Activated B cell treated with CpG ODN at 0.5 μM for 24 hours (primary cell): ENCODE measurements at regions of chrX and their contacts with region 1.

Region 1: GRCh38 chrX:2707334-2707760 is 16.3 kb downstream of the CD99 start:
- DNase-seq: peak; percentile 51
- ATAC-seq: peak; percentile 90
- H3K4me3 Mint-ChIP-seq: peak overlapping the region; percentile 69
- H3K27ac Mint-ChIP-seq: peak overlapping the region; percentile 93
- H3K4me1 Mint-ChIP-seq: peaks cover 71% of the 10 kb centered on the region
- H3K27me3 Mint-ChIP-seq: no peaks in the 10 kb centered on the region
- CTCF ChIP-seq: no peak

Region 2: GRCh38 chrX:1554469-1555210 is 1152.7 kb before region 1 on chrX:
- CTCF ChIA-PET with region 1: no interaction called
- POLR2A ChIA-PET with region 1: no interaction called
- intact Hi-C with region 1: no loop called
- DNase-seq: peak; percentile 38
- ATAC-seq: peak; percentile 95
- H3K4me3 Mint-ChIP-seq: peak overlapping the region; percentile 72
- H3K27ac Mint-ChIP-seq: peak overlapping the region; percentile 93
- H3K4me1 Mint-ChIP-seq: peaks cover 60% of the 10 kb centered on the region
- H3K27me3 Mint-ChIP-seq: no peaks in the 10 kb centered on the region
- CTCF ChIP-seq: no peak

Region 3: GRCh38 chrX:2654436-2655340 is 52.7 kb before region 1 on chrX:
- CTCF ChIA-PET with region 1: no interaction called
- POLR2A ChIA-PET with region 1: no interaction called
- intact Hi-C with region 1: loop called (anchors 5 kb)
- DNase-seq: no peak
- ATAC-seq: no peak
- H3K4me3 Mint-ChIP-seq: no peak overlapping the region
- H3K27ac Mint-ChIP-seq: no peak overlapping the region
- H3K4me1 Mint-ChIP-seq: peaks cover 6% of the 10 kb centered on the region
- H3K27me3 Mint-ChIP-seq: no peaks in the 10 kb centered on the region
- CTCF ChIP-seq: no peak

Region 4: GRCh38 chrX:2696698-2697215 is 10.6 kb before region 1 on chrX:
- CTCF ChIA-PET with region 1: no interaction called
- POLR2A ChIA-PET with region 1: no interaction called
- intact Hi-C with region 1: loop called (anchors 1 kb)
- DNase-seq: no peak
- ATAC-seq: peak; percentile 83
- H3K4me3 Mint-ChIP-seq: peak overlapping the region; percentile 61
- H3K27ac Mint-ChIP-seq: peak overlapping the region; percentile 83
- H3K4me1 Mint-ChIP-seq: peaks cover 98% of the 10 kb centered on the region
- H3K27me3 Mint-ChIP-seq: no peaks in the 10 kb centered on the region
- CTCF ChIP-seq: no peak

Region 5: DNA sequence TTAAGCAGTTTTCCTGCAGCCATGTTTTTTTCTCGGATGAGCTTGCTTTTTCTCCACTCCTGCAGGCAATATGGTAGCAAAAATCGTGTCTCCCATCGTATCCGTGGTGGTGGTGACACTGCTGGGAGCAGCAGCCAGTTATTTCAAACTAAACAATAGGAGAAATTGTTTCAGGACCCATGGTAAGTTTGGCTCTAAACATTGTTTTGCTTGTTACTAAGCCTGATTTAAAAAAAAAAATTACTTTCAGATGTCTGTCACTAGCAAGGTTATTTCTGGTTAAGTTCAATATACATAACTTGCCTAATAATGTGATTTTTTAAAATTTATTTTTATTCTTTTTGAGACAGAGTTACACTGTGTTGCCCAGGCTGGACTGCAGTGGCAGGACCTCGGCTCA is 103.9 kb after region 1 on chrX:
- CTCF ChIA-PET with region 1: no interaction called
- POLR2A ChIA-PET with region 1: no interaction called
- intact Hi-C with region 1: loop called (anchors 5 kb)
- DNase-seq: no peak
- ATAC-seq: no peak
- H3K4me3 Mint-ChIP-seq: no peak overlapping the region
- H3K27ac Mint-ChIP-seq: no peak overlapping the region
- H3K4me1 Mint-ChIP-seq: peaks cover 3% of the 10 kb centered on the region
- H3K27me3 Mint-ChIP-seq: peaks cover 11% of the 10 kb centered on the region
- CTCF ChIP-seq: no peak